Posterior cingulate gyrus (tissue), 11 donors: ENCODE measurements at regions of chr10 and their contacts with region 1.

Region 1: GRCh38 chr10:71314028-71314693 is 4.9 kb upstream of the SLC29A3 start:
- DNase-seq: peak in 8 of 10 donors; percentile 40 to 90 (median 61)

Region 2: DNA sequence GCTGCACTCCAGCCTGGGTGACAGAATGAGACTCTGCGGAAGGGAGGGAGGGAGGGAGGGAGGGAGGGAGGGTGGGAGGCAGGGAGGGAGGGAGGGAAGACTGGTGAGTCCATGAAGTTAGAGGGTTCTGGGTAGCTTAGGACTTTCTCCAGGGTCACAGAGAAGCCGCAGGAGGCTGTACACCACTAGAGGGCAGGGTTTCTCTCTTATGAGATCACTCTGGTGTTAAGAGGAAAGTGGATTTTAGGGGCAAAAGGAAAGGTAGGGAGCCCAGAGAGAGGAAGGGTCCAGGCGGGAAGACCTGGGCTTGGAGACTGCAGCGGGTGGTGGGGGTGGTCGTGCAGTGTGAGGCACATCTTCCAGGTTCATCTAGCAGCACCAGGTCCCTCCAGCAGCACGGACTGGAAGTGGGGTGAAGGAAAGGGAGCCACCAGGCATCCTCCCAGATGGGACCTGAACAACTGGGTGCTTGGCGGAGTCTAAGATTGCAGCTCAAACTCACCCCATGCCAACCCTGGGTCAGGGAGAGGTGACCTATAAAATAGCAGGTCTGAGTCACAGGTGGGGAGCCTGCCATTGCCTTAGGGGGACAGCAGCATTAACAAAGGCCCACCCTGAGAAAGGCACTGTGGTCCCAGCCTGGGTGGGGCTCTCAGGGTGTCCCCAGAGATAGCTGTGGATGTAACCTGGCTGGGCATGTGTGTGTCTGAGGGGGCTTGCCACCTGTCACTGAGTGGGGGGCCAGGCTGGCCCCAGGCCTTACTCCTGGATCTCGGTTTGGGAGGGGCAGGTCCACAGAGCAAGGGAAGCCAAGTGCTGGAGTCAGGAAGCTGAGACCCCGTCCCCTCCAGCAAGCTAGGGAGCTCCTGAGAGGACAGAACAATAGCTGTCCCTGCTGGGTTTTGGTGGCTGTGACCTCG is 43.6 kb before region 1 on chr10:
- intact Hi-C with region 1: no loop called
- DNase-seq: peak in 4 of 10 donors; percentile 53 to 88 (median 72)

Region 3: GRCh38 chr10:71569775-71570588 is 255.8 kb after region 1 on chr10:
- intact Hi-C with region 1: loop called (anchors 2 kb)
- DNase-seq: peak in 8 of 10 donors; percentile 57 to 94 (median 85)

Region 4: DNA sequence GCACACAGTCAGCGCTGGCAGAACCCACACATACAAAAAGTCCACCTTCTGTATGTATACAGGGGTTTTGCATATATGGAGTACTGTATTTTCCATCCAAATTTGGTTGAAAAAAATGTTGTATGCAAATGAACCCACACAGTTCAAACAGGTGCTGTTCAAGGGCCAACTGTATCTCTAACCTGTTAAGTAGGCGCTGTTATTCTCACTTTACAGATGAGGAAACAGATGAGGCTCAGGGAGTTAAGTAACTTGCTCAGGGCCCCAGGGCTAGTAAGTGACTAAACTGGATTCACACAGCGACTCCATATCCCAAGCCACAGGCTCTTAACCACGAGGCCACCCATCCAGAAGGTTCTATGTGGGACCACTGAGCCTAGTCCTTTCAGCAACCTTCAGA is 335.5 kb after region 1 on chr10:
- intact Hi-C with region 1: no loop called
- DNase-seq: no peak

Region 5: DNA sequence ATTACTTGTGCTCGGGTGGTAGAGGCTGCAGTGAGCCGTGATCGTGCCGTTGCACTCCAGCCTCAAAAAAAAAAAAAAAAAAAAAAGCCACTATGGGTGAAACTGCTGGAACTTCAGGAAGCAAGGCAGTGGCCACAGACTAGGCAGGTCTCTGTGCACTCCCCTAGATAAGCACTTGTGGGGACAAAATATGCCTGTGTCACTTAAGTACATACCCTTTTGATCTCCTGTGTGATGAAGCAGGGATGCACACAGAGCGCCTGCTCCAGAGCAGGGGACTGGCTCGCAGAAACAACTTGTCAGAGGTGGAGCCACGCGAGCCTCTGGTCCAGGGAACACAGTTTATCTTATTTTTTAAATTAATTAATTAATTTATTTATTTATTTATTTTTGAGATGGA is 579.8 kb after region 1 on chr10:
- intact Hi-C with region 1: loop called (anchors 1 kb)
- DNase-seq: peak in 2 of 10 donors; percentile 19 to 61